Spleen (tissue), 13 donors: ENCODE measurements at regions of chr18 and their contacts with region 1.

Region 1: GRCh38 chr18:24878289-24878688 is 417.9 kb downstream of the HRH4 start:
- DNase-seq: no peak
- H3K4me3 ChIP-seq: no peak overlapping the region
- H3K27ac ChIP-seq: no peak overlapping the region
- H3K4me1 ChIP-seq: no peaks in the 10 kb centered on the region
- H3K27me3 ChIP-seq: no peaks in the 10 kb centered on the region
- CTCF ChIP-seq: peak in 9 of 11 experiments; percentile 28 to 68 (median 46)
- POLR2A ChIP-seq: no peak

Region 2: DNA sequence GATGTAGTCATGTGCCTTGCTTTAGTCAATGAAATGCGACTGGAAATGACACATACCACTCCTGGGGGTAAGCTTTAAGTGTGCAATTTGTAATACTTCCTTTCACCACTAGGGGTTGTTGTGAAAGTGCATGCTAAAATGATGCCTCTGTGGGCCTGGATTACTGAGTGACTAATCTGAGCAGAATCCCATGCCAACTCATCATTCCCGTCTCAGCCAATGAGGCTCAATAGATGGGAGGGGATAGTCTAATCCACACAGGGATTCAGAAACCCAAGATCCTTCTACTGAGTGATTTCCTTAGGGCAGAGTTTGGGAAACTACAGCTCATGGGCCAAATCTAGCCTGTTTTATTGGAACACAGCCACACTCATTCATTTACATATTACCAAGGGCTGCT is 363.9 kb before region 1 on chr18:
- intact Hi-C with region 1: no loop called
- DNase-seq: no peak
- H3K4me3 ChIP-seq: no peak overlapping the region
- H3K27ac ChIP-seq: no peak overlapping the region
- H3K4me1 ChIP-seq: no peaks in the 10 kb centered on the region
- H3K27me3 ChIP-seq: no peaks in the 10 kb centered on the region
- CTCF ChIP-seq: peak in 7 of 11 experiments; percentile 23 to 60 (median 50)
- POLR2A ChIP-seq: no peak

Region 3: DNA sequence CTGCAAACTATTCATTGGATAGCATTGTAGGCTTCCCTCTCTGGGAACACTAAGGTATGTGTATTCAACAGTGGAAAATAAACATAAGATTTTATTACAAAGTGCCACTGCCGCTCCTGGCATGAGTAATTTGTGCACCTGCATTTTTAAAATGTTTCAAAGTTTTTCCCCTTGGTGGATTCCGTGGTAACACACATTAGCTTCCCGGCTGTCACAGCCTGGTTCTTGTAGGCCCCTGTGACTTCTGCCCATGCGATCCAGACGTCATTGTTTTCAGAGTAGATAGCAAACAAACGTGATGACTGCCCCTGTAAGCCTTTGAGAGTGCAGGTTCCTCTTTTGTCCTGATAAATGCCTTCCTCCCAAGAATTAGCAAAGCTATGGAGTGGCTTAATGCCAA is 52.7 kb after region 1 on chr18:
- intact Hi-C with region 1: loop called (anchors 10 kb)
- DNase-seq: no peak
- H3K4me3 ChIP-seq: no peak overlapping the region
- H3K27ac ChIP-seq: no peak overlapping the region
- H3K4me1 ChIP-seq: peaks cover 0 to 5% (median 0%) of the 10 kb centered on the region in 6 donors
- H3K27me3 ChIP-seq: no peaks in the 10 kb centered on the region
- CTCF ChIP-seq: no peak
- POLR2A ChIP-seq: no peak

Region 4: DNA sequence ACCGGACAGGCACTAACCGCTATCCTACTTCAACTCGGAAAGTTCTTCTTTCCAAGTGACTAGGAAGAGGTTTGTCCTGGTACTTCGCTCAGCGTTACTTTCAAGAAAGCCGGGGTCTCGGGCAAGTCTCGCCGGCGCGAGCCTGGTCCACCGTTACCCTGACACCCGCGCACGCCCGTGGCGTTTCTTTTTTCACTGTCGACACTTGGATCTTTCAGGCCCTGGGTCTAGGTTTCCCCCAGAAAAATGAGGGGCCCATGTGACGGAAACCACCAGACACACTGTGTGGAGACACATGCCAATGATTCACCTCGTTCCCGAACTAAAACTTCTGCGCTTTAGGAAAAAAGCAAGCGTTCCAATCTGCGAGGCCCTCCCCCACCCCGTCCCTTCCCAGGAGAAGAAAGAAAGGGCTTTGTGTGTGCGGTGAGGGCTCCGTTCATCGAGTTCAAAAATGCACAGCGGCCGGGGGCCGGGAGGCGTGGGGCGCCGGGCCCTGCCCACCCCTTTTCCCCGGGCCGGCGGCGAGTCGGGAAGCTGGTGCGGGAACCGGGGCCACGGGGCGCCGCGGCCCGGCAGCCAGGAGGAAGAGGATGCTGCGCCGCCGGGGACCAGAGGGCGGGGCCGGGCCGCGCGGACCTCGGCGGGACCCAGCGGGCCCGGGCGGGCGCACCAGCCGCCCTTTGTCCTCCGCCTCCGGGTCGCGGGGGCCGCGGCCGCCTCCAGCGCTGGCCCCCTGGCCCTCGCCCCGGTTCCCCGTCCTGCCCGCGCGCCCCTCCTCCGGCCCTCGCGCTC is 471.0 kb after region 1 on chr18:
- intact Hi-C with region 1: loop called (anchors 10 kb)
- DNase-seq: peak; percentile 81
- H3K4me3 ChIP-seq: peak overlapping the region; percentile 47 to 79 (median 58)
- H3K27ac ChIP-seq: peak overlapping the region; percentile 32 to 92 (median 89)
- H3K4me1 ChIP-seq: peaks cover 5 to 40% (median 24%) of the 10 kb centered on the region in 6 donors
- H3K27me3 ChIP-seq: peaks cover 0 to 78% (median 35%) of the 10 kb centered on the region in 7 donors
- CTCF ChIP-seq: no peak
- POLR2A ChIP-seq: no peak

Region 5: DNA sequence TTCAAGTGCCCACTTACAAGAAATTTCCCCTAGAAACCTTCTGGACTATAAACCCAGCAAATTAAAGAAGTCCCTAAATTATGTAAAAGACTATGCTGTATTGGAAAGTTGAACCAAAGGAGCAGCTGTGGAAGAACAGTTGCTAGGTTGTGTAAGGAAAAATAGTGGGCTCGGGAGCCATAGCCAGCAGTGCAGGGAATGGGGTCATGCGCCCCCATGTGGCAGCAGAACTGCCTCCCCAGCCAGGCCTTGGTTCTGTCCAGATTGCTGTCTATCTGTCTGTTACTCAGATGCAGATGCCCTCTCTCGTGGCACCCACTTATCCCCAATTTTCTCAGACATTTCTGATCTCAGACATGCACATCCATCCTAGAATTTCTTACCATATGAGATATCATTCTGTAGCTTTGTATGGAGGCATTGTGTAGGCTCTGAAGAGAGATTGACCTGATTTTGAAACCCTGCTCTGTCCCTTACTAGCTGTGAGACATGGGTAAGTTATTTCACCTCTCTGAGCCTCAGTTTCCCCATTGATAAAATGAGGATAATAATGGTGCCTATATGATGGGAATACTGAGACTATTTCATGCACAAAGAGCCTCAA is 953.8 kb after region 1 on chr18:
- intact Hi-C with region 1: loop called (anchors 10 kb)
- DNase-seq: no peak
- H3K4me3 ChIP-seq: no peak overlapping the region
- H3K27ac ChIP-seq: no peak overlapping the region
- H3K4me1 ChIP-seq: no peaks in the 10 kb centered on the region
- H3K27me3 ChIP-seq: peaks cover 0 to 4% (median 0%) of the 10 kb centered on the region in 7 donors
- CTCF ChIP-seq: peak in 10 of 11 experiments; percentile 30 to 78 (median 68)
- POLR2A ChIP-seq: no peak